Activated CD8-positive, alpha-beta T cell treated with anti-CD3 and anti-CD28 coated beads for 36 hours (primary cell): ENCODE measurements at regions of chr19 and their contacts with region 1.

Region 1: DNA sequence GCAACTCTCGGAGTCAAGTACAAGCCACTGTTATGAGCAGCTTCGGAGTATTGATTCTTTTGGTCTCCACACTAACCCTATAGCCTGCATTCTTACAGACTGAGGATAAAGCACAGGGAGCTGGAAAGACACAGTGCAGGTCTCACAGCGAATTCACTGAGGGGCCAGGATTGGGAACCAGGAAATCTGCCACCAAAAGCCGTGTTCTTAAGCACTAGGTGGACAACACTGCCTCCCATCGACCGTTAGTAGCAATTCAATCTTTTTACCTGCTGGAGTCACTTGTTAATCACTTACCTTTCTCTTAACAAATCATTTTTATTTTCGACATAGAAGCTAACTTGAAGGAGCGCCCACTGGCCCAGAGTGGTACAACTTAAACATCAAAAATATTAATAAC is 6.3 kb downstream of the PMIS2 start:
- DNase-seq: peak; percentile 55
- ATAC-seq: peak; percentile 54
- H3K4me3 Mint-ChIP-seq: no peak overlapping the region
- H3K27ac Mint-ChIP-seq: no peak overlapping the region
- H3K4me1 Mint-ChIP-seq: peaks cover 5% of the 10 kb centered on the region
- H3K27me3 Mint-ChIP-seq: peaks cover 7% of the 10 kb centered on the region
- CTCF ChIP-seq: peak; percentile 73

Region 2: GRCh38 chr19:35549174-35549788 is 42.9 kb before region 1 on chr19:
- CTCF ChIA-PET with region 1: interaction called, 36 read pairs
- POLR2A ChIA-PET with region 1: interaction called, 4 read pairs
- intact Hi-C with region 1: no loop called
- DNase-seq: peak; percentile 67
- ATAC-seq: no peak
- H3K4me3 Mint-ChIP-seq: no peak overlapping the region
- H3K27ac Mint-ChIP-seq: no peak overlapping the region
- H3K4me1 Mint-ChIP-seq: peaks cover 33% of the 10 kb centered on the region
- H3K27me3 Mint-ChIP-seq: no peaks in the 10 kb centered on the region
- CTCF ChIP-seq: peak; percentile 86